ENCODE measurements at regions of chr5 and their contacts with region 1.

Region 1: DNA sequence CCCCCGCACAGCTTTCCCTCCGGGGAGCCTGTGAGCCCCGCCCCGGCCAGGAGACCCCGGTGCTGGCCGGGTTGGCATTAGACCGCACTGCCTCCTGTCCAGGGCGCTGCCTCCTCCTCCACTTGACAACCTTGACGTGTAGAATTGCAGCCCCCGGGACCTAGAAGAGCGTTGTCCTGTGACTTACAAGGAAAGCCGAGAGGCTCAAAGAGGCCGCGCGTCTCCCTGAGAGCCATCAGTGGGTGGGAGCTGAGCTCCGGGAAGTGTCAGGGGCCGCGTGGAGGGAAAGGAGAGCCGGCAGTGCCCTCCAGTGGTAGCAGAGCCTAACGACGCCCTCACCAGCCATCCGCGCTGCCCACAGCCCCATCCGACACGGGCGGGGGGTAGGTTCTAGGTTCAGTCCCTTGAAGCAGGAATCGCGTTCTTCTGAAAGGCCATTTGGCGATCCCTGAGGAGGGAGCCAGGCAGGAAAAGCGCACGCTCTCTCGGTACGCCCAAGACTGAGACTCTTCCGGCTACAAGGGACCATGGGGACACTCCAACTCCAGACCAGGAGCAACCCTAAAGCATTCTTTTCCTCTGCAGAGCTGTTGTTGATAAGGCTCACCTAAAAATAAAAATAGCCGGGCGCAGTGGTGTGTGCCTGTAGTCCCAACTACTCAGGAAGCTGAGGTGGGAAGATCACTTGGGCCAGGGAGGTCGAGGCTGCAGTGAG is 40.6 kb upstream of the SAP30L start:
- DNase-seq: peak; percentile 69 to 87 (median 76)
- H3K4me3 ChIP-seq: peak overlapping the region in 58 of 59 donors; percentile 17 to 70 (median 54)
- H3K27ac ChIP-seq: peak overlapping the region in 4 of 59 donors; percentile 10 to 70 (median 46)
- H3K27me3 ChIP-seq: no peaks in the 10 kb centered on the region
- CTCF ChIP-seq: peak; percentile 48 to 96 (median 86)

Region 2: GRCh38 chr5:154072414-154073171 is 332.6 kb before region 1 on chr5:
- intact Hi-C with region 1: loop called (anchors 1 to 2 kb)
- DNase-seq: peak; percentile 64 to 86 (median 81)
- H3K4me3 ChIP-seq: peak overlapping the region in 4 of 59 donors; percentile 10 to 19 (median 15)
- H3K27ac ChIP-seq: peak overlapping the region in 1 of 59 donors; percentile 71
- H3K27me3 ChIP-seq: no peaks in the 10 kb centered on the region
- CTCF ChIP-seq: peak; percentile 64 to 99 (median 95)

Region 3: GRCh38 chr5:154077696-154078095 is 327.5 kb before region 1 on chr5:
- intact Hi-C with region 1: loop called (anchors 1 to 2 kb)
- DNase-seq: no peak
- H3K4me3 ChIP-seq: no peak overlapping the region
- H3K27ac ChIP-seq: no peak overlapping the region
- H3K27me3 ChIP-seq: no peaks in the 10 kb centered on the region
- CTCF ChIP-seq: no peak

Region 4: GRCh38 chr5:154179846-154180710 is 225.2 kb before region 1 on chr5:
- intact Hi-C with region 1: loop called in 1 of 2 experiments (anchors 2 kb)
- DNase-seq: peak in 2 of 10 donors; percentile 27 to 43
- H3K4me3 ChIP-seq: no peak overlapping the region
- H3K27ac ChIP-seq: no peak overlapping the region
- H3K27me3 ChIP-seq: no peaks in the 10 kb centered on the region
- CTCF ChIP-seq: peak; percentile 54 to 84 (median 77)

Region 5: DNA sequence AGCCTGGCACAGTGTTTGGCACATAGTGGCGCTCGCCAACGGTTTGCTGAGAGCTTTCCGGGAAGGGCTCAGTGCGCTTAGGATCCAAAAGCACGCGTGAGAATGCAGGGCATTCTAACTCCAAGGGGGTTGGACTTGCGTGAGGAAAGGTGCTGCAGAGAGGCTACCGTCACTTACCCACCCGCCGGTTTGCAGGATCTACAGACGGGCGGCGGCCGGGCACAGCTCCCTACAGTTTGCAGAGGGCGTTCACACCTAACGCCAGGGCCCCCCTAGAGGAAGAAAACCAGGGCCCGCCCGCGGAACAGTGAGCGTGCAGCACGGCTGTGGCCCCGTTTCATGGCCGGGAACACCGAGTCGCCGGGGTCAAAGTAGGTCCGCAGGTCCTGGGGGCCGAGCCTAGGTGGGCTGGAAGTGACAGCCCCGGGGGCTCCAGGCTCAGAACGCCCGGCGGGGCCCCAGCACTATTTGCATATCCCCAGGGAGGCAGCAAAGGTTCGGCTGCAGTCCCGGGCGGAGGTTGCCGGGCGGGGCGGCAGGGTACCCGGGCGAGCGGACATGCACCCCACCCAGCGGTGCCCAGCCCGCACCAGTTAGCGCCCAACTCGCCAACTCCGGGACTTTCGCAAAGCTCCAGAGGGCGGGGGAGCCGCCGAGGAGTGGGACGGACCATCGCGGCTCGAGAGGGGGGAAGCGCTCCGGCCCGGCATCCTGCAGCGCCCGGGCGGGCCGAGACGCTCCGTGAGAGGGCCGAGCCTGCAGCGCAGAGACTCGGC is 215.2 kb before region 1 on chr5:
- intact Hi-C with region 1: loop called (anchors 5 to 10 kb)
- DNase-seq: peak; percentile 62 to 86 (median 80)
- H3K4me3 ChIP-seq: peak overlapping the region; percentile 53 to 98 (median 89)
- H3K27ac ChIP-seq: peak overlapping the region in 47 of 59 donors; percentile 4 to 89 (median 67)
- H3K27me3 ChIP-seq: no peaks in the 10 kb centered on the region
- CTCF ChIP-seq: peak in 50 of 56 donors; percentile 0 to 67 (median 43)

Region 6: DNA sequence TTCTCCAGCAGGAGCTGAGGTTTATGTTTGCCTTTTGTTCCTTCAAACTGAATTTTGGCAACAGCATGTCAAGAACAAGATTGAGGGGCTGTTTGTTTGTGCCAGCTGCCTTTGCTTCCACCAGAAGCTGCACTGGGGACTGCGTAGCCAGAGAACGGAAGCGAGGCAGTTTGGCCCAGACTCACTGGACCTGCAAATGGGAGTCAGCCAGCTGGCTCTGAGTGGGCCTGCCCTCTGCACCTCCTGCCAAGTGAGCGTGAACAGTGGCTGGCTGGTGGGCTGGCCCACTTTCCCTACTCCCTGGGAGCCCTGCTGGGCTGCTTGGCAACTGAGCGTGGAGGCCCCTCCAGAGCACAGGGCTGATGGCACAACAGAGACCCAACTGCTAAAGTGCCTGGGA is 103.1 kb before region 1 on chr5:
- intact Hi-C with region 1: no loop called
- DNase-seq: peak; percentile 29 to 87 (median 62)
- H3K4me3 ChIP-seq: peak overlapping the region in 3 of 59 donors; percentile 9 to 26 (median 16)
- H3K27ac ChIP-seq: peak overlapping the region in 9 of 59 donors; percentile 3 to 56 (median 36)
- H3K27me3 ChIP-seq: no peaks in the 10 kb centered on the region
- CTCF ChIP-seq: no peak

Measured in dorsolateral prefrontal cortex (tissue), 120 donors.